Endothelial cell of umbilical vein (primary cell): ENCODE measurements at regions of chr7 and their contacts with region 1.

Region 1: DNA sequence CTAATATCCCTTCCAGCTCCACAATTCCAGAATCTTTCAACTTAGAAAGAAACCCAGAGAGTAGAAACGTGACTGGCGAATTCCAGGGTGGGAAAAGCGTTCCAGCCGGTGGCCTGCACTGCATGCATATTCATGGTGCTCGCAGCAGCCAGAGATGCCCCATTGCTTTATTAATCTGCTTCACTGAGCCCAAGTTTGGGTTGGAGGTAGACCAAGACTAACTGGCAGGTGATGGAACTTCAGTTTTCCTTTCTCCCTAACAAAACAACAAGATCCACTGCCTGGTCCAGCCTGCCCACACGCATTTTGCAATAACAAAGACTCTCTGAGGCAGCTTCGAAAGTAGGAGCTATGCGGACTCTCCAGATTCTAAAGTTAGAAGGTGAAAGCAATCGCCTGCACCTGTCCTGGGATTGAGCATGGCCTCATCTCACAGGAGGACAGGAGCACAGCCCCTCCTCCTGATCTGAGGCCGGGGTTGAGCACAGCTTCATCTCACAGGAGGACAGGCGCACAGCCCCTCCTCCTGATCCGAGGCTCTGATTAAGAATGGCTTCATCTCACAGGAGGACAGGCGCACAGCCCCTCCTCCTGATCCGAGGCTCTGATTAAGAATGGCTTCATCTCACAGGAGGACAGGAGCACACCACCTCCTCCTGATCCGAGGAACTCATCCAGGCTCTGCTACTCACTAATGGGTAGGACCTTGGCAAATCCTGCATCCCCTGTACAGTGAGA is 127.8 kb upstream of the LANCL2 start:
- DNase-seq: no peak
- H3K4me3 ChIP-seq: no peak overlapping the region
- H3K27ac ChIP-seq: no peak overlapping the region
- H3K4me1 ChIP-seq: no peaks in the 10 kb centered on the region
- H3K27me3 ChIP-seq: peaks cover 15 to 23% of the 10 kb centered on the region in 2 experiments
- CTCF ChIP-seq: no peak
- POLR2A ChIP-seq: no peak

Region 2: DNA sequence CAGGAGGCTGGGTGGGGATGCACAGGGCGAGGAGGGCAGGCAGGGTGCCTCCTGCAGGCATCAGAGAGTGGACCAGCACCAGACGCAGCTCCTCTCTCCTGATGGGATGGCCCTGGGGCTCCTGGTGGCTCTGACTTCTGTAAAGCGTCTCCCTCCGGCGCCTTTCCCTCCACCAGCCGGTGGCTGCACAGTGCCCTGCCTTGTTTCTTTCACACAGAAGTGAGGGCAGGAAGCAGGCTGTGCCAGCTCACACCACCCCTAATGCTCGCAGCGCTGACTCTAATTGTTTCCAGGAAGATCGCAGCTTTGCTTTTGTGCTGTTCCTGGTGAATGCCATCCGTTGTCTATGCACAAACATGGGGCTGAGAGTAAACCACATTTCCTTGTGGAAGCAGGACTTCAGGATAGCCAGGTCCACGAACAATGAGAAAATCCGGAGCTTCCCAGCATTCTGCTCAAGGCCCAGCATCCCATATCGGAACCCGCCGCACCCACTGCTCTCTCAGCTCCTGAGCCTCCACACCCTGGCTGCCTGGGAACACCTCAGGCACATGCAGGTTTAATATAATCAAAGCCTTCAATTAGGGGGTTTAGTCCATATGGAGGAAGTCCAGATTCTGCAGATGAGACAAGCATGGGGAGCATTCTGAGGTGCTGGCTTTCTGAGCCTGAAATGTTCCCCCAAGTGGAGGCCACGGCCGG is 24.3 kb before region 1 on chr7:
- CTCF ChIA-PET with region 1: no interaction called
- POLR2A ChIA-PET with region 1: no interaction called
- dilution Hi-C with region 1: no loop called
- intact Hi-C with region 1: no loop called
- DNase-seq: peak; percentile 50
- H3K4me3 ChIP-seq: no peak overlapping the region
- H3K27ac ChIP-seq: no peak overlapping the region
- H3K4me1 ChIP-seq: peaks cover 8% of the 10 kb centered on the region
- H3K27me3 ChIP-seq: peaks cover 0 to 2% of the 10 kb centered on the region in 2 experiments
- CTCF ChIP-seq: peak in 1 of 2 donors; percentile 4
- POLR2A ChIP-seq: no peak

Region 3: DNA sequence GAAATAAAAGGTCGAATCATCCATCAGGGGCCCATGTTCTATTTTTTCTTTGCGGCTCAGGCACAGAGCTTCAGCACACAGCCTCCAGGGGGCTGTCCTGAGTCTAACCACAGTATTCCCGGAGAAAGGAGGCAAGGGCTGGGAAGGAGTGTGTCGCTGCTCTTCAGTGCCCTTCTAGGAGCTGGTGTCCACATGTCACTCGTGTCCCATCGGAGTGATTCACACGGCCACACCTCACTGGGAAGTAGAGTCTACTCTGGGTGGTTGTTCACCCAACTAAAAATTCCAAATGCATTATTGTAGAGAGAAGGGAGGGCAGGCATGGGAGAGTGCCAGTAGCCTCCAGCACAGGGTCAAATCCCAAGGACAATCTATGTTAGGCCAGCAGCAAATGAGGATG is 13.0 kb after region 1 on chr7:
- CTCF ChIA-PET with region 1: interaction called, 12 read pairs
- POLR2A ChIA-PET with region 1: no interaction called
- dilution Hi-C with region 1: no loop called
- intact Hi-C with region 1: no loop called
- DNase-seq: peak; percentile 27
- H3K4me3 ChIP-seq: no peak overlapping the region
- H3K27ac ChIP-seq: no peak overlapping the region
- H3K4me1 ChIP-seq: peaks cover 8% of the 10 kb centered on the region
- H3K27me3 ChIP-seq: peaks cover 27 to 33% of the 10 kb centered on the region in 2 experiments
- CTCF ChIP-seq: peak; percentile 73 to 75
- POLR2A ChIP-seq: no peak

Region 4: DNA sequence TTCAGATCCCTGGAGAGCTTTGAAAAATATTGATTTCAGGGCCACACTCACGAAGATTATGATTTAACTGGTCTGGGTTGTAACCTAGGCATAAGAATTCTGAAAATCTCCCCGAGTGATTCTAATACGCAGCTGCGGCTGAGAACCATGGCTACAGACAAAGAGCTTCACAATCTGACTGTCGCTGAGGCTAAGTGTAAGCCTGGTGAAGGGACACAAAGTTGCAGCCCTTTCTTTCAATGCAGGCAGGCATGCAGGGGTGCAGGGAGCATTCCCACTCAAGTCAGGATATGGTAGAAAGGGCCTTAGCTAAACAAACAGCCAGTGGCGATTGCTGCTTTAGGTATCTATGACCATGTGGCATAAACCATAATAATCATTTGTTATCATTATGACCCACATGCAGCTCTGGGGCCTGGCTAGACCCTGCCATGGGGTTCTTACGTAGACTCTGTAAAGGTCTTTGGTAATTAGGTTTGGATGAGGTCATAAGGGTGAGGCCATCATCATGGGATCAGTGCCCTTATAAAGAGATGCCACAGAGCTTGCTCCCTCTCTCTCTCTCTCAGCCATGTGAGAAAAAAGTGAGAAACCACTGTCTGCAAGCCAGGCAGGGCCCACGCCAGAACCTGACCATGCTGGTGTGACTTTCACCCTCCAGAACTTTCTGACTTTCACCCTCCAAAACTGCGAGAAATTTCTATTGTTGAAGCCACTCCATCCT is 39.4 kb after region 1 on chr7:
- CTCF ChIA-PET with region 1: no interaction called
- POLR2A ChIA-PET with region 1: no interaction called
- dilution Hi-C with region 1: no loop called
- intact Hi-C with region 1: no loop called
- DNase-seq: no peak
- H3K4me3 ChIP-seq: no peak overlapping the region
- H3K27ac ChIP-seq: no peak overlapping the region
- H3K4me1 ChIP-seq: no peaks in the 10 kb centered on the region
- H3K27me3 ChIP-seq: peaks cover 0 to 5% of the 10 kb centered on the region in 2 experiments
- CTCF ChIP-seq: no peak
- POLR2A ChIP-seq: no peak